ENCODE measurements at regions of chr1 and their contacts with region 1.

Region 1: GRCh38 chr1:156813750-156814570 is 2.7 kb downstream of the SH2D2A start:
- DNase-seq: peak; percentile 28 to 67 (median 52)
- H3K4me3 ChIP-seq: peak overlapping the region; percentile 32 to 74 (median 59)
- H3K27ac ChIP-seq: no peak overlapping the region
- H3K4me1 ChIP-seq: peaks cover 4 to 34% (median 31%) of the 10 kb centered on the region in 4 experiments
- H3K27me3 ChIP-seq: peaks cover 0 to 4% (median 0%) of the 10 kb centered on the region in 5 experiments

Region 2: GRCh38 chr1:156797212-156797871 is 16.6 kb before region 1 on chr1:
- CTCF ChIA-PET with region 1: interaction called, 64 read pairs
- POLR2A ChIA-PET with region 1: interaction called, 3 read pairs
- DNase-seq: peak; percentile 68 to 77 (median 76)
- H3K4me3 ChIP-seq: no peak overlapping the region
- H3K27ac ChIP-seq: no peak overlapping the region
- H3K4me1 ChIP-seq: peaks cover 0 to 7% (median 5%) of the 10 kb centered on the region in 4 experiments
- H3K27me3 ChIP-seq: no peaks in the 10 kb centered on the region

Region 3: GRCh38 chr1:156838981-156839410 is 25.0 kb after region 1 on chr1:
- CTCF ChIA-PET with region 1: interaction called, 17 read pairs
- POLR2A ChIA-PET with region 1: no interaction called
- DNase-seq: peak in 2 of 3 donors; percentile 59 to 68
- H3K4me3 ChIP-seq: no peak overlapping the region
- H3K27ac ChIP-seq: no peak overlapping the region
- H3K4me1 ChIP-seq: no peaks in the 10 kb centered on the region
- H3K27me3 ChIP-seq: peaks cover 0 to 42% (median 26%) of the 10 kb centered on the region in 5 experiments

Region 4: DNA sequence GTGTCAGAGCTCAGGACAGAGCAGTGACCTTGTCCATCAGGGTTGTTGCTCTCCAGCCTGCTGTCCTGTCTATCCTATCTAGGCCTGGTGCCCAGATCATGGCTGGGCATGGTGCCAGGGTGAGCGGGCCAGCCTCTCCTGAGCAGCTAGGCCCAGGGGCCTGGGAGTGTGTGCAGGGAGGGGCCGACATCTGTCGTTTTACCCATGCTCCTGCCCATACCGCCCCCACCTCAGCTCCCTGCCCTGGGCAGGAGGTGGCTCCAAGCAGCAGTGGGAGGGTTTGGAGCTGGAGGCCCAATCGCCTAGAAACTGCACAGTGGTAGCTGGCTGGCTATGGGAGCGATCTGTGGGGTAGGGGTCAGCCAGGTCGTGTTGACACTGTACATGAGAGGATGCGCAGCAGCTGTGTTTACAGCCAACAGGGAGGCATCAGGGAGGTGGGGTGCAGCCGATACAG is 38.5 kb after region 1 on chr1:
- CTCF ChIA-PET with region 1: interaction called, 282 read pairs
- POLR2A ChIA-PET with region 1: interaction called, 3 read pairs
- DNase-seq: no peak
- H3K4me3 ChIP-seq: no peak overlapping the region
- H3K27ac ChIP-seq: no peak overlapping the region
- H3K4me1 ChIP-seq: peaks cover 0 to 9% (median 5%) of the 10 kb centered on the region in 4 experiments
- H3K27me3 ChIP-seq: peaks cover 0 to 47% (median 30%) of the 10 kb centered on the region in 5 experiments

Region 5: DNA sequence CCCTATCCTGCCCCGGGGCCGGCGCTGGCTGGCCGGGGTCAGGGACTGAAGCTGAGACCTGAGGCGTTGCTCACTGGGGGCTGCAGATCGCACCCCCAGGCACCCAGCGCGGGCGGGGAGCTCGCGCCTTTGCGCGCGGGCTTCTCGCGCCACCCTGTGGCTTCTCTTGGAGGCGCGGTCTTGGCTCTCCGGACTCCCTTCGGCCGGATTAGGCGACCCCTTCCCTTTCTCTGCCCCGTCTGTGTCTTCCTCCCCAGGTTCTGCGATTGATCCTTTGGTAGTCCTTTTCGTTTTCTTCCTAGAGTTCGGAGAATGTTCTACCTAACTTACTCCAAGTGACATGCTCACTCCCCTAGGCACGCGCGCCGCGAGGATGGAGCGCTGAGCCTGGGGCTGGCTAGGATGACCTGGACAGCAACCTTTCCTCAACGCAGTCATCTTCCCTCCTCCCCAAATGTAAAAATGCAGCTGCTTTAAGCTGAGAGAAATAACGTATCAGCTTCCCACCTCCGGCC is 46.2 kb after region 1 on chr1:
- CTCF ChIA-PET with region 1: interaction called, 282 read pairs
- POLR2A ChIA-PET with region 1: no interaction called
- DNase-seq: peak; percentile 31 to 61 (median 57)
- H3K4me3 ChIP-seq: peak overlapping the region; percentile 22 to 69 (median 54)
- H3K27ac ChIP-seq: no peak overlapping the region
- H3K4me1 ChIP-seq: peaks cover 2 to 43% (median 39%) of the 10 kb centered on the region in 4 experiments
- H3K27me3 ChIP-seq: peaks cover 0 to 78% (median 47%) of the 10 kb centered on the region in 5 experiments

Region 6: GRCh38 chr1:156880473-156880872 is 66.5 kb after region 1 on chr1:
- CTCF ChIA-PET with region 1: no interaction called
- POLR2A ChIA-PET with region 1: no interaction called
- DNase-seq: no peak
- H3K4me3 ChIP-seq: no peak overlapping the region
- H3K27ac ChIP-seq: no peak overlapping the region
- H3K4me1 ChIP-seq: no peaks in the 10 kb centered on the region
- H3K27me3 ChIP-seq: peaks cover 0 to 32% (median 9%) of the 10 kb centered on the region in 5 experiments

Region 7: DNA sequence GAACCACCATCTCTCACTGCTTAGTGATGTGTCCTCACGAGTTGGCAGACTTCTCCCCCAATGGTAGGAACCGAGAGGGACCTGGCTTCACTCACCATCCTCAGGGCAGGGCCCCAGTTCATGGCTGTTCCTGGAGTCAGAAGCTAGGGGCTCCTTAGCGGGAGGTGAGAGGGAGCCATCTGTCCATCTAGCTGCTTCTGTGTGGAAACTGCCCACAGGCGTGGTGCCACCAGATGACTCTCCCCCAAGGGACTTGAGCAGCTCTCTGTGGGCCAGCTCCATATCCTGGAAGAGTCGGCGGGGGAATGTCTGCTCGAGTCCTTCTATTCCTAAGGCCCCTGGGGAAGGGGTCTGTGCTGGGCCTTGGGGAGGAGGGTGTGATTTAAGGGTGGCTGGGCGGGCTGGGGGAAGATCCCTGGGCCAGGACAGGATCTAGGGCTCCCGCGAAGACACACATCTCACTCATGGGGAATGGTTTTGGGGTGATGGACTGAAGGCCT is 122.8 kb after region 1 on chr1:
- CTCF ChIA-PET with region 1: no interaction called
- POLR2A ChIA-PET with region 1: no interaction called
- DNase-seq: peak in 1 of 3 donors; percentile 37
- H3K4me3 ChIP-seq: no peak overlapping the region
- H3K27ac ChIP-seq: no peak overlapping the region
- H3K4me1 ChIP-seq: peaks cover 0 to 1% (median 0%) of the 10 kb centered on the region in 4 experiments
- H3K27me3 ChIP-seq: no peaks in the 10 kb centered on the region

Measured in common myeloid progenitor, CD34-positive (primary cell).